ENCODE measurements at regions of chr1 and their contacts with region 1.

Region 1: DNA sequence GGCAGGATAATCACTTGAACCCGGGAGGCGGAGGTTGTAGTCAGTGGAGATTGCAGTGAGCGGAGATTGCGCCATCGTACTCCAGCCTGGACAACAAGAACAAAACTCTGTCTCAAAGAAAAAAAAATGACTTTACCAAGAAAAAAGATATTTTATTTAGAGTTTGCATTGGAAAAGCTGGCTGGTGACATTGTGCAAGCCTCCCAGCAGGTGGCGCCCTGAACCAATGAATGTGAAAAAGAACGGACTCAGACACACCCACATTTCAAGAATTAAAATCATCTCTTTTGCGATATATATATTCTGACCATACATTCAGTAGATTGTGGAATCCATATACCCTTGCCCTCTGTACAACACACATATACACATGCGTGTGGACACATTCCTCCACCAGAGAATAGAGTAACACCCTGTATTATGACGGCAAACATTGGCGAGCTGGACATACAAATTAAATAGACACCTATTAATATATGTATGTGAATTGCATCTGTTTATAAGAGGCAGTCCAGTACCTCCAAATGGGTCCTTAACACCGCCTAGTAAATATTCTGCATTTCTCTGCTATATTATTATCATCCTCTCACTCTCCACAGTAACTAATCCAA is 39.0 kb upstream of the CADM3 start:
- DNase-seq: no peak
- H3K4me3 ChIP-seq: no peak overlapping the region
- H3K27me3 ChIP-seq: peaks cover 1% of the 10 kb centered on the region; the same call in 1 of the 2 replicates
- CTCF ChIP-seq: peak; percentile 93

Region 2: GRCh38 chr1:159122005-159122621 is 10.3 kb before region 1 on chr1:
- CTCF ChIA-PET with region 1: interaction called, 17 read pairs
- POLR2A ChIA-PET with region 1: no interaction called
- DNase-seq: no peak
- H3K4me3 ChIP-seq: no peak overlapping the region
- H3K27me3 ChIP-seq: peaks cover 5% of the 10 kb centered on the region
- CTCF ChIP-seq: no peak

Region 3: GRCh38 chr1:159152031-159152430 is 19.7 kb after region 1 on chr1:
- CTCF ChIA-PET with region 1: interaction called, 13 read pairs
- POLR2A ChIA-PET with region 1: no interaction called
- DNase-seq: no peak
- H3K4me3 ChIP-seq: no peak overlapping the region
- H3K27me3 ChIP-seq: no peaks in the 10 kb centered on the region
- CTCF ChIP-seq: no peak

Region 4: DNA sequence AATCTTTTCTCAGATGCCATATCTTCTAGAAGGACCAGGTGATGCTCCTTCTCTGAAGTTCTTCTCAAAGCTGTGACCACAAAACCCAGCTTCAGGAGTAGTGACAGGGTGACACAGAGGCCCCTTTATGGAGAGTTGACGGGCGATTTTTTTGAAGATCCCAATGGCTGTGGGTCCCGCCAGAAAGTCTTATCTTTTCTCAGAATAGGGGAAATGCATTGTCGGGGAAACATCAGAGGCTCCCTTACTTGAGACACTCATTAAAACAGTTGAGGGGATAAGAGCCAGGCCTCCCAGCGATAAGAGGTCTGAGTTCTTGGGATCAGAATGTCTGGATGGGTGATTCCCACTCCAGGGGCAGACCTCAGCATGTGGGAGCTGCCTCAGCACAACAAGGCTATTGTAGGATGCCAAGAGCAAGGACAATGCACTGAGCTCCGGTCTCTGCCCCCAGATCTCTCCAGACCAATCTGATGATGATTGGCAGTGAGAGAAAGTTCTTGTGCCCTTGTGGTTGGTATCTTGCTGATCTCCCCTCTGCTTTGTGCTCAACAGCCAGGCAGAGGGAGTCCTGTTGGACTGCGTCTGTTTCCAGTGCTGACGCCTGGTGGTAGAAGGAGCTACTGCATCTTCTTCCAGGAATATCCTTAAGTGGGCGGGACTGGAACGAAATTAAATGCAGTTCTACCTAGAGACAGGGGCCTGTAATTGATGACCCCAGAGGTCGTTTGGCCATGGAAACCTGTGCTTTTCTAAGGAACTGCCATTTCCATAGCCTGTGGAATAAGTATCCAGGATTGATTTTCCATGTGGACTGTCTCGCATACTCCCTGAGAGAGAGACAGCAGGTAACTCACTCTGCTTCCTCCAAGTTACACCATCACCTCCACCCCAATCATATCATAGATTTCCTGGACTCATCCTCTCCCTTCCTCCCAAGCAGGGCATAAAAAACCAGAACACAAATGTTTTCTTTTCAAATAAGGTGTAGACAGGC is 65.5 kb after region 1 on chr1:
- CTCF ChIA-PET with region 1: interaction called, 43 read pairs
- POLR2A ChIA-PET with region 1: no interaction called
- DNase-seq: peak; percentile 6
- H3K4me3 ChIP-seq: no peak overlapping the region
- H3K27me3 ChIP-seq: no peaks in the 10 kb centered on the region; the same call in 1 of the 2 replicates
- CTCF ChIP-seq: peak; percentile 92

Measured in BJ (cell line).